Activated CD4-positive, alpha-beta T cell treated with anti-CD3 and anti-CD28 coated beads for 36 hours (primary cell): ENCODE measurements at regions of chr10 and their contacts with region 1.

Region 1: GRCh38 chr10:128631801-128632241 is 505.6 kb upstream of the MKI67 start:
- DNase-seq: no peak
- ATAC-seq: no peak
- H3K4me3 Mint-ChIP-seq: no peak overlapping the region
- H3K27ac Mint-ChIP-seq: no peak overlapping the region
- H3K4me1 Mint-ChIP-seq: peaks cover 3% of the 10 kb centered on the region
- H3K27me3 Mint-ChIP-seq: peaks cover 4% of the 10 kb centered on the region

Region 2: GRCh38 chr10:128859738-128860386 is 228.0 kb after region 1 on chr10:
- CTCF ChIA-PET with region 1: no interaction called
- POLR2A ChIA-PET with region 1: no interaction called
- intact Hi-C with region 1: loop called (anchors 5 to 10 kb)
- DNase-seq: peak; percentile 58
- ATAC-seq: no peak
- H3K4me3 Mint-ChIP-seq: no peak overlapping the region
- H3K27ac Mint-ChIP-seq: no peak overlapping the region
- H3K4me1 Mint-ChIP-seq: no peaks in the 10 kb centered on the region
- H3K27me3 Mint-ChIP-seq: peaks cover 8% of the 10 kb centered on the region